CD8-positive, alpha-beta memory T cell (primary cell): ENCODE measurements at regions of chr3 and their contacts with region 1.

Region 1: GRCh38 chr3:45830121-45830520 is 11.8 kb downstream of the LZTFL1 start:
- DNase-seq: no peak
- H3K4me3 ChIP-seq: no peak overlapping the region
- H3K4me3 Mint-ChIP-seq: no peak overlapping the region
- H3K27ac ChIP-seq: no peak overlapping the region
- H3K27ac Mint-ChIP-seq: no peak overlapping the region
- H3K4me1 ChIP-seq: no peaks in the 10 kb centered on the region
- H3K4me1 Mint-ChIP-seq: peaks cover 0 to 6% (median 0%) of the 10 kb centered on the region in 3 donors
- H3K27me3 ChIP-seq: no peaks in the 10 kb centered on the region
- H3K27me3 Mint-ChIP-seq: no peaks in the 10 kb centered on the region

Region 2: GRCh38 chr3:45593708-45594609 is 236.2 kb before region 1 on chr3:
- CTCF ChIA-PET with region 1: no interaction called
- POLR2A ChIA-PET with region 1: interaction called, 11 read pairs
- DNase-seq: peak; percentile 52 to 78 (median 72)
- H3K4me3 ChIP-seq: peak overlapping the region; percentile 72
- H3K4me3 Mint-ChIP-seq: peak overlapping the region; percentile 90 to 96 (median 93)
- H3K27ac ChIP-seq: peak overlapping the region; percentile 66
- H3K27ac Mint-ChIP-seq: peak overlapping the region; percentile 47 to 98 (median 89)
- H3K4me1 ChIP-seq: peaks cover 58% of the 10 kb centered on the region
- H3K4me1 Mint-ChIP-seq: peaks cover 49 to 60% (median 58%) of the 10 kb centered on the region in 3 donors
- H3K27me3 ChIP-seq: no peaks in the 10 kb centered on the region
- H3K27me3 Mint-ChIP-seq: no peaks in the 10 kb centered on the region

Region 3: GRCh38 chr3:45677033-45677433 is 153.1 kb before region 1 on chr3:
- CTCF ChIA-PET with region 1: no interaction called
- POLR2A ChIA-PET with region 1: no interaction called
- DNase-seq: peak; percentile 44 to 80 (median 61)
- H3K4me3 ChIP-seq: peak overlapping the region; percentile 43
- H3K4me3 Mint-ChIP-seq: peak overlapping the region; percentile 36 to 86 (median 74)
- H3K27ac ChIP-seq: no peak overlapping the region
- H3K27ac Mint-ChIP-seq: peak overlapping the region; percentile 93 to 98 (median 96)
- H3K4me1 ChIP-seq: peaks cover 21% of the 10 kb centered on the region
- H3K4me1 Mint-ChIP-seq: peaks cover 16 to 25% (median 23%) of the 10 kb centered on the region in 3 donors
- H3K27me3 ChIP-seq: no peaks in the 10 kb centered on the region
- H3K27me3 Mint-ChIP-seq: peaks cover 0 to 1% of the 10 kb centered on the region in 2 donors